PC-9 (cell line): ENCODE measurements at regions of chr14 and their contacts with region 1.

Region 1: DNA sequence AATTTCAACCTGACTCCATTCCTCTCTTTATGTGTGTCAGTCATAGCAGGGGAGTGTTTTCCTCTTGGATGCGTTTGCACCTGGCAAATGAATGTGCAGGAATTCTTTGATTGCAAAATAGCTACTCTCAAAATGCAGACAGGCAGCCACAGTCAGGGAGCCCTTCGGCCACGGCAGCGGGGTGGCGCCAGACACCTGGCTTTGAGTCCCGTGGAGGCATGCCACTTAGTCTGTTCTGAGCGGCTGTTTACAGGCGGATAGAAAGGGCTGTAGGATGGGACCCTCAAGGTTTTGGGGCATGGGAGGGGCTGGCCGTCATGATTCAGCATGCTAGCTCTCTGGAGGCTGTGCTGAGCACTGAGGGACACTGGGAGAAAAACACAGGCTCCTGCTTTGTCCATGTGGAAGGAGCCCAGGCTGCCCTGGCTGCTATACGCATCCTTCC is 117.1 kb downstream of the SLC25A47 start:
- DNase-seq: peak; percentile 54 to 73
- H3K4me3 ChIP-seq: no peak overlapping the region
- H3K27ac ChIP-seq: no peak overlapping the region
- H3K4me1 ChIP-seq: peaks cover 21% of the 10 kb centered on the region
- H3K27me3 ChIP-seq: no peaks in the 10 kb centered on the region
- CTCF ChIP-seq: peak; percentile 79

Region 2: GRCh38 chr14:100486025-100486828 is 46.0 kb after region 1 on chr14:
- CTCF ChIA-PET with region 1: no interaction called
- POLR2A ChIA-PET with region 1: no interaction called
- intact Hi-C with region 1: no loop called
- DNase-seq: peak in 1 of 2 experiments; percentile 16
- H3K4me3 ChIP-seq: no peak overlapping the region
- H3K27ac ChIP-seq: no peak overlapping the region
- H3K4me1 ChIP-seq: no peaks in the 10 kb centered on the region
- H3K27me3 ChIP-seq: no peaks in the 10 kb centered on the region
- CTCF ChIP-seq: no peak

Region 3: GRCh38 chr14:100645192-100645990 is 205.2 kb after region 1 on chr14:
- CTCF ChIA-PET with region 1: no interaction called
- POLR2A ChIA-PET with region 1: no interaction called
- intact Hi-C with region 1: loop called (anchors 2 kb)
- DNase-seq: peak; percentile 50 to 53
- H3K4me3 ChIP-seq: no peak overlapping the region
- H3K27ac ChIP-seq: no peak overlapping the region
- H3K4me1 ChIP-seq: no peaks in the 10 kb centered on the region
- H3K27me3 ChIP-seq: no peaks in the 10 kb centered on the region; the same call in 1 of the 2 replicates
- CTCF ChIP-seq: peak; percentile 74

Region 4: GRCh38 chr14:101917413-101918017 is 1477.3 kb after region 1 on chr14:
- CTCF ChIA-PET with region 1: interaction called, 14 read pairs
- POLR2A ChIA-PET with region 1: no interaction called
- intact Hi-C with region 1: no loop called
- DNase-seq: no peak
- H3K4me3 ChIP-seq: no peak overlapping the region
- H3K27ac ChIP-seq: no peak overlapping the region
- H3K4me1 ChIP-seq: no peaks in the 10 kb centered on the region
- H3K27me3 ChIP-seq: no peaks in the 10 kb centered on the region
- CTCF ChIP-seq: no peak